ENCODE measurements at regions of chr20 and their contacts with region 1.

Region 1: DNA sequence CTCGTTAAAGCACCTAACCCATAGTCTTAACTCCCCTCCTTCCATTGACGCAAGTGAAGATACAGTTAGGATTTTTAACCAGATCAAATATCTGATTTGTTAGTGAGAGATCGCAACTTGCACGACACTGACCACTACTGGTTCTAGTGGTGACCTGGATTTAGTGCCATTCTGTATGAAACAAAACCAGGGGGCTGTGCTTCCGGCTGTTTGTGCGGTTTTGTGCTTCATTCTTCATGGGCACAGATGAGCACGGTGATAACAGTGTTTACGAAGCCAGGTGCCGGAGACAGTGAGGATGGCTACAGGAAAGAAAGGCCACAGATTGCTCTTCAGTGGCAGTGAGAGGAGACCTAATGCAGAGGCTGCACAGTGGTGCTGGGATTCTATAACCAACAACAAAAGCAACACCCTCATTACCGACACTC is 75.5 kb downstream of the NOL4L start:
- DNase-seq: no peak
- H3K4me3 ChIP-seq: no peak overlapping the region
- CTCF ChIP-seq: peak; percentile 26

Region 2: DNA sequence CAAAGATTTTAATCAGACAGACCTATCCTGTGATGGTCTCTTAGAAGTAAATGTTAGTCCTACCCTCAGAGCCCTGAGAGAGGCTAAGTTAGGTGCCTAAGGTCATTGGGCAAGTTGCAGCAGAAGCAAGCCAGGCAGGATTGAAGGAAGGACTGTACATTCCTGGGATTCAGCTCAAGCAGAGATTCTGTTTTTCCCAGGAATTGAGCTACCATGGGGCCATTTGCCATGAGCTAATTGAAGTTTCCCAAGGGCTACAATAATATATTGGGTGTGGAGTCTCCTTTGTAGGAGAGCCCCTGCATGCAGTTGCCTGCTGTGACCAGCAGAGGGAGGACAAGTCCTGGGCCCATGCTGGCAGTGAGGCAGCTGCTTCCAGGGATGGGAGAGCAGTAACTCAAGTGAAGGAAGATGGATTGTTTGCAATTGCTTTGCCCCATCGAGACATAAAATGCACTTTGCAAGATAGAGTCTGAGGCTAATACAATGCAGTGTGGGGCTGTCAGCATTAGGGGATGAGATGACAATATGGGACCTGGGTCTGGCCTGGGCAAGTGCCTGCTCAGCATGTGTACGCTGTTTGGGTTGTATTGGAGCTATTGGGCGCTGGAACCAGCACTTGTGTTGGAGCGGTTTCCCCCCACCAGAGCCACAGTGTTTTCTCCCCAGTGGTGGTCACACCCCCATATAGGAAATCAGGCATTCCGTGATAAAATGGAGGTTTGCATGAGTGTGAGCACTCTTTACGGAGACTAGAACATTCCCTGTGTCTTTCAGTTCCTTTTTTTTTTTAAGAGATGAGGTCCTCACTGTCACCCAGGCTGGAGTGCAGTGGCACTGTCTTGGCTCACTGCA is 280.5 kb after region 1 on chr20:
- in situ Hi-C with region 1: loop called (anchors 10 kb)
- DNase-seq: peak; percentile 54
- H3K4me3 ChIP-seq: no peak overlapping the region
- CTCF ChIP-seq: peak; percentile 100